WTC11 (cell line): ENCODE measurements at regions of chr12 and their contacts with region 1.

Region 1: DNA sequence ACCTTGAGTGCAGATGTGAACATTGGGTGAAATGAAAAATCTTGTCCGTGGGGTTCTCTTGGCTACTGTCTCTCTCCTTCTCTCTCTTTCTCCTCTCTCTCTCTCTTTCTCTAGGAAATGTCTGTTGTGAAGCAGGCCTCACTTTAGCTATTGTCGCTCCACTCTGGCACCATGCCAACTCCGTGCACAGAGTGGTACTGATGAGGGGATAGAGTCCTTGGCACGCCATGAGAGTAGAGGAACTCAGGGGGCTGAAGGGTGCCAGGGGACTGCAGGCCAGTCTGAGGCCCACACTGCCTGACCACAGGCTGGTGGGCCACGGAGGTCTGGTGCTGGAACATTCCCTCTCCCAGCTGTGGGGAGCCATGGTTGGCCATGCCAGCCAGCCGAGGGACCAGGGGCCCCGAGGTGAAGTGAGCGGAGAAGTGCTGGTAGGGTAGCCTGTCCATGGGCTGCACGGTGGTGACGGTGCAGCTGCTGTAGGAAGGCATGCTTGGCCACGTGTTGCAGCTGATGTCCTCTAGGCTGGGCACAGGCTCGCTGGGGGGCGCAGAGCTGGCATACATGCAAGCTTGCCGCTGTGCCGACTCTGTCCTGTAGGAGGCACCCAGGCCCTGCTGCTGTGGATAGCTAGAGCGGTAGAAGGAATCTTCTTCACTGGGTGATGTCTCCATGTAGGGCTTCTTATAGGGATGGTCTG is 50.4 kb downstream of the TBX5 start:
- DNase-seq: peak; percentile 80
- ATAC-seq: peak; percentile 98
- H3K4me3 Mint-ChIP-seq: no peak overlapping the region
- H3K27ac Mint-ChIP-seq: no peak overlapping the region
- H3K4me1 Mint-ChIP-seq: peaks cover 14% of the 10 kb centered on the region
- H3K27me3 Mint-ChIP-seq: no peaks in the 10 kb centered on the region
- CTCF ChIP-seq: peak; percentile 42; the same call in 1 of the 2 replicates

Region 2: DNA sequence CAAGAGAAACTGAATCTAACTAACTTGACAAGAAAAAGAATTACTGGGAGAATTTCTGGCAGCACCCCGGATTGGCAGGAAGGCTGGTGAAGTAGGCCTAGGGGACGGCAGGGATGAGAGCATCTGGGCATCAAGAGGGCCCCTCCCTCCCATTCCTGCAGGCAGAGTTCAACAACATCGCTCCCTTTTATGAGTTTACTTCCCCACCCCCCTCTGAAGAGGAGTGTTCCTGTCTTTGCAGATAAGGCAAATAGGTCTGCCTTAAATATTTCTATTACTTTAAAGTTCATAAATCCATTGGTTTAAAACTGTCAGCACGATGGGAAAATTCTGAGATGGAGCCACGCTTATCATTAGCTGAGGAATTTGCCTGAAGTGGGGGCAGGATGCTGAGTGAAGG is 118.3 kb before region 1 on chr12:
- CTCF ChIA-PET with region 1: no interaction called
- POLR2A ChIA-PET with region 1: no interaction called
- DNase-seq: no peak
- ATAC-seq: no peak
- H3K4me3 Mint-ChIP-seq: no peak overlapping the region
- H3K27ac Mint-ChIP-seq: no peak overlapping the region
- H3K4me1 Mint-ChIP-seq: peaks cover 21% of the 10 kb centered on the region
- H3K27me3 Mint-ChIP-seq: no peaks in the 10 kb centered on the region; the same call in 1 of the 2 replicates
- CTCF ChIP-seq: no peak

Region 3: GRCh38 chr12:114302117-114302516 is 53.4 kb before region 1 on chr12:
- CTCF ChIA-PET with region 1: interaction called, 10 read pairs
- POLR2A ChIA-PET with region 1: no interaction called
- DNase-seq: no peak
- ATAC-seq: peak; percentile 78
- H3K4me3 Mint-ChIP-seq: no peak overlapping the region
- H3K27ac Mint-ChIP-seq: no peak overlapping the region
- H3K4me1 Mint-ChIP-seq: peaks cover 22% of the 10 kb centered on the region
- H3K27me3 Mint-ChIP-seq: peaks cover 3% of the 10 kb centered on the region; the same call in 1 of the 2 replicates
- CTCF ChIP-seq: no peak

Region 4: DNA sequence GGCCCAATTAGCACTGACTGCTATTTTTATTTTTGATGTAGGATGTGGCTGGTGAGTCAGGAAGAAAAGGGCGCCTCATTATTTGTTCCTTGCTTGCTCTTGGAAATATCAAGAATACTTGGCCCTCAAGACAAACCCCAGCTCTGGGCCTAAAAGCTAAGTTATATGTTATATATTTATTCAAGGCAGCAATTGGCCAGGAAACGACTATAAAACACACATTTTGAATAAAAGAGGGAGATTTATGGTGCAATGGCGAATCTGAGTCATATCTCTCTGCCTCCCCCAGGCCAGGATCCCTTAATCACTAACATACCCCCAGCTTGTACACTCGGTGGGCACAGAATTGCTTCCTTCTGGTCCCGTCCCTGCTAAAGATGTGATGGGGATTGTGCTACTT is 12.9 kb before region 1 on chr12:
- CTCF ChIA-PET with region 1: interaction called, 14 read pairs
- POLR2A ChIA-PET with region 1: no interaction called
- DNase-seq: no peak
- ATAC-seq: no peak
- H3K4me3 Mint-ChIP-seq: no peak overlapping the region
- H3K27ac Mint-ChIP-seq: no peak overlapping the region
- H3K4me1 Mint-ChIP-seq: peaks cover 30% of the 10 kb centered on the region
- H3K27me3 Mint-ChIP-seq: peaks cover 4% of the 10 kb centered on the region
- CTCF ChIP-seq: no peak

Region 5: DNA sequence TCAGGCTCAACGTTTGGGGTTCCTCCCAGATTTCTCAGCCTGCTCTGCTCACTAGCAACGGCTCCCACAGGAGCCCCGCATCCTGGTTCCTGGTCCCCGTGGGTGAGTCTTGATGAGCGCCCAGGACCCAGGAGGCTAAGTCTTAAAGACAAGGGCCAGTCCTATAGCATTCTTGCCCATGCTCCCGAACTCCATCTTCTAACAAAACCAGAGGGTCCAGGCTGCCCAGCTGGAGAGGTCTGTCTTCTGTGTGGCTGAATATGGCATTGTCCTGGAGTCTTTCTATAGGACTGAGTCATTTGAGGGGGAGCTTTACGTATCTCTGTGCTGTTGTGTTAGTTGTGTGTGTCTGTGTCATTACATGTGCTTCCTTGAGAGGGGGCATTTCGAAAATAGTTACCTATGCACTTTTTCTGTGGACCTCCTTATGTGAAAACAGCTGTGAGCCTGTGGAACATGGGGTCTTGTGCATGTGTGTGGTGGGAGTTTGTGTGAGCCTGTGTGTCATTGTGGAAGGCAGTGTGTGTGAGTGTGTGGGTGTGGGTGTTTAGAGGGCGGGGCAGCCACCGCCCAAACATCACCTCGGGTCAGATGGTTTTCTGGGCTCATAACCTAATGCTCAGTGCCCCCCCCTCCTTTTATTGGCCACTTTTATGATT is 59.5 kb after region 1 on chr12:
- CTCF ChIA-PET with region 1: no interaction called
- POLR2A ChIA-PET with region 1: no interaction called
- DNase-seq: no peak
- ATAC-seq: no peak
- H3K4me3 Mint-ChIP-seq: peak overlapping the region; percentile 60
- H3K27ac Mint-ChIP-seq: no peak overlapping the region
- H3K4me1 Mint-ChIP-seq: peaks cover 44% of the 10 kb centered on the region
- H3K27me3 Mint-ChIP-seq: peaks cover 98% of the 10 kb centered on the region
- CTCF ChIP-seq: no peak

Region 6: GRCh38 chr12:114480337-114481199 is 125.0 kb after region 1 on chr12:
- CTCF ChIA-PET with region 1: interaction called, 12 read pairs
- POLR2A ChIA-PET with region 1: no interaction called
- DNase-seq: peak; percentile 14
- ATAC-seq: no peak
- H3K4me3 Mint-ChIP-seq: peak overlapping the region; percentile 82
- H3K27ac Mint-ChIP-seq: no peak overlapping the region
- H3K4me1 Mint-ChIP-seq: peaks cover 34% of the 10 kb centered on the region
- H3K27me3 Mint-ChIP-seq: peaks cover 83% of the 10 kb centered on the region
- CTCF ChIP-seq: no peak